OCI-LY7 (cell line): ENCODE measurements at regions of chr12 and their contacts with region 1.

Region 1: DNA sequence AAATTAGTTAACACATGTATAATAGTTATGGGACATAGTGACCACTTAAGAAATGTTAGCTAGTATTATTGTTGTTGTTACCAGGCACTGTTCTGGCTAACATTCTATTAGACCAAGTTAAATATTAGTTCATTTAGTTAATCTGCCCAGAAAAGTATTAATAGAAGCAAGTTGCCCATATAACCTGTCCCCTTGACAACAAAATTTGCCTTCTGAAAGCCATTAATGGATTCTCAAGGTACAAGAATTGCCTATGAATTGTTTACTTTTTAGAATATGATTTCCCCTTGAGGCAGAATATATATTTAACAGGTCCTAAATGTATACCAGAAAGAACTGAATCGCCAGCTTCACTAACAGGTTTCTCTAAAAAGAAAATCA is 167.3 kb upstream of the TMCC3 start:
- DNase-seq: no peak
- H3K4me3 ChIP-seq: peak overlapping the region; percentile 65
- H3K27ac ChIP-seq: peak overlapping the region; percentile 100
- H3K4me1 ChIP-seq: peaks cover 63% of the 10 kb centered on the region
- CTCF ChIP-seq: no peak

Region 2: DNA sequence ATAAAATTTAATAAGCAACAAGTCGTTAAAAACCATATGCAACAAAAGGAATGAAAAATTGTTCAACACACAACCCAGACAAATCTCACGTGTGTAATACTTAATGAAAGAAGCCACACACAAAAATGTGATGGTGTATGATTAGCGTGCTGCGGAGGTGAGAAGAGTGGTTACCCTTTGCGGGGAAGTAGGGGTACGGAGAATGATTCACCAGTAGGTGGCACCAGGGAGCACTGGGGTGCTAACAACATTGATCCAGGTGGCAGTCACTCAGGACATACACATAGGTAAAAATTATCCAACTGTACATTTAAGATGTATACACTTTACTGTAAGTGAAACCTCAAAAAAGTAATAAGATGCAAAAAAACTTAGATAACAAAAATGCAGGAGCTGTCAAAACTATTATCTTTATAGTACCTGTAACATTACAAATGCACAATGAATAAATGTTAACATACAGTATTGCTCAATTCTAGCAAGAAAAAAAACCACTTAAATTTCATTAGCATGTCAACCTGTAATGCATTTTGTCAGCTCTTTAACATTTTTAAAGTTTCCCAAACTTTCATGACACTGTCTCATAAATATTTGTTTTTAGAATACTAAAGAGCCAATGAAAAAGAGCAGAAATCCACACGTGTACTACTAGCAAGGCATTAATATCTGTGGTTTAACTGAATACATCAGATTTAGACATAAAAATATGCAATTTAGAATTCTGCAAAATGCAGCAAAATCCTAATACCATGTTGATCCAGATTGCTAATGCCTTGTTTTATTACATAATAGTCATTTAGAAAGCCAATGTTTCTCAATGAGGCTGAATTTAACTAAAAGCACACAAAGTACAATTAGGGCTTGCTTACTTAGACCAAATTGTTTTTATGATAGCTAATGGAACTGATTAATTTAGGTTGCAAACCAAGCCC is 214.0 kb before region 1 on chr12:
- CTCF ChIA-PET with region 1: no interaction called
- POLR2A ChIA-PET with region 1: no interaction called
- intact Hi-C with region 1: loop called (anchors 5 kb)
- DNase-seq: peak; percentile 61
- H3K4me3 ChIP-seq: no peak overlapping the region
- H3K27ac ChIP-seq: no peak overlapping the region
- H3K4me1 ChIP-seq: no peaks in the 10 kb centered on the region
- CTCF ChIP-seq: peak; percentile 96

Region 3: DNA sequence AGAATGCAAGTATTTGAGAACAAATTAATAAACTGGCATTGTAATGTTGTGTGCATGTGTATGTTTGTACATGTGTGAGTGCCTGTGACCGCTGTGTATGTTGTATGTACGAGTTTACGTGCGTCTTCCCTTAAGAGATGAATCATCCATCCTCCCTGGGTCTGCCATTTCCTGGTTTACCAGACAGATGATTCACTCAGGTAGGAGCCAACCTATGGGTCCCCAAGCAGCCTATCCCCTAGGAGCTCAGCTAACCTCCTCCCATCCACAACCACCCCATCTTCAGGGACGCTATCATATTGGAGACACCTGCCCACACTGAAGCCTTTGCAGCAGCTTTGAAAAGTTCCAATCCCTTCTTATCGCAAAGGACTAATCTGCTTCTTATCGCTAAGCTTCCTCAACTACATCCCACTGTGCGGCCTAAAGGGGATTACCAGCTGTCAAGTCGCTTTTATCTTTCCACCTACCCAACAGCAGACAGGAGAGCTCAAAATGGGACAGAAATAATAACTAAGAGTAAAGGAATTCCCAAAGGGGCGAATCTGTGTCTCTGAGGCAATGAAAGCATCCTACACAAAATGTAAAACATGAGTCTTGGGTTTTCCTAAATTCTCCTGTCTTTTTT is 85.8 kb before region 1 on chr12:
- CTCF ChIA-PET with region 1: no interaction called
- POLR2A ChIA-PET with region 1: no interaction called
- intact Hi-C with region 1: no loop called
- DNase-seq: no peak
- H3K4me3 ChIP-seq: no peak overlapping the region
- H3K27ac ChIP-seq: no peak overlapping the region
- H3K4me1 ChIP-seq: peaks cover 14% of the 10 kb centered on the region
- CTCF ChIP-seq: no peak

Region 4: GRCh38 chr12:94769047-94769420 is 48.7 kb before region 1 on chr12:
- CTCF ChIA-PET with region 1: interaction called, 5 read pairs
- POLR2A ChIA-PET with region 1: interaction called, 27 read pairs
- intact Hi-C with region 1: loop called (anchors 1 kb)
- DNase-seq: peak; percentile 90
- H3K4me3 ChIP-seq: peak overlapping the region; percentile 63
- H3K27ac ChIP-seq: peak overlapping the region; percentile 97
- H3K4me1 ChIP-seq: peaks cover 61% of the 10 kb centered on the region
- CTCF ChIP-seq: no peak

Region 5: GRCh38 chr12:94795520-94795919 is 22.2 kb before region 1 on chr12:
- CTCF ChIA-PET with region 1: no interaction called
- POLR2A ChIA-PET with region 1: no interaction called
- intact Hi-C with region 1: no loop called
- DNase-seq: no peak
- H3K4me3 ChIP-seq: no peak overlapping the region
- H3K27ac ChIP-seq: no peak overlapping the region
- H3K4me1 ChIP-seq: peaks cover 39% of the 10 kb centered on the region
- CTCF ChIP-seq: no peak

Region 6: DNA sequence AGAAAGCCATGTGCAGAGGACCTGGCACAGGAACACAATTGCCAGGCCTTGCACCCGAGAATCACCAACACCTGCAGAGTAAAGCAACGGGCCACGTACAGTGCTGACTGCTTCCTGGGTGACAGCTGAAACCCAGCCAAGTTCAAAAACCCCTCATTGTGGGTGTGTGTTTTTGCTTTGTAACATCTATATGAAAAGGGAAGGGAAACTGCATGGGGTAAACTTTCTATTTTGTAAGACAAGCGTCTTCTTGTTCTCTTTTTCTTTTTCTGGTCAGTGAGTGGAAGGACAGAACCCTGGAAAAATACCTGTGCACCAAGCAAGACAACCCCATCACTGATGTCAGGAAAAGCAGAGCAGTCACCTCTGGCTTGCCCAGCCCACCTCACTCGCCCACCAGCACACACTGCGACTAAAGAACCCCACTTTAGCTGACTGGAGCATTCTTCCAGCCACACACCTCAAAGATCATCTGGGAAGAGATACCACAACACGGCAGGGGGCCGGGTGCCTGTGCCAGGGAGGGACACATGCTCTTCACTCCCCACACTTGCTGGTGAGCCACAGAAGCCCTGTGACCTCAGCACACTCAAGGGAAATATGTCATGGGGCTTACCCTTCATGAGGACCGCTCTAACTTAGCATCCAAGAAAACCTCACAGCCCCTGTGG is 13.5 kb after region 1 on chr12:
- CTCF ChIA-PET with region 1: no interaction called
- POLR2A ChIA-PET with region 1: interaction called, 35 read pairs
- intact Hi-C with region 1: loop called (anchors 1 kb)
- DNase-seq: peak; percentile 97
- H3K4me3 ChIP-seq: peak overlapping the region; percentile 48
- H3K27ac ChIP-seq: peak overlapping the region; percentile 97
- H3K4me1 ChIP-seq: peaks cover 49% of the 10 kb centered on the region
- CTCF ChIP-seq: no peak

Region 7: GRCh38 chr12:94980577-94980976 is 162.9 kb after region 1 on chr12:
- CTCF ChIA-PET with region 1: no interaction called
- POLR2A ChIA-PET with region 1: no interaction called
- intact Hi-C with region 1: loop called (anchors 5 kb)
- DNase-seq: peak; percentile 34
- H3K4me3 ChIP-seq: no peak overlapping the region
- H3K27ac ChIP-seq: no peak overlapping the region
- H3K4me1 ChIP-seq: no peaks in the 10 kb centered on the region
- CTCF ChIP-seq: peak; percentile 76